ENCODE measurements at regions of chr11 and their contacts with region 1.

Region 1: DNA sequence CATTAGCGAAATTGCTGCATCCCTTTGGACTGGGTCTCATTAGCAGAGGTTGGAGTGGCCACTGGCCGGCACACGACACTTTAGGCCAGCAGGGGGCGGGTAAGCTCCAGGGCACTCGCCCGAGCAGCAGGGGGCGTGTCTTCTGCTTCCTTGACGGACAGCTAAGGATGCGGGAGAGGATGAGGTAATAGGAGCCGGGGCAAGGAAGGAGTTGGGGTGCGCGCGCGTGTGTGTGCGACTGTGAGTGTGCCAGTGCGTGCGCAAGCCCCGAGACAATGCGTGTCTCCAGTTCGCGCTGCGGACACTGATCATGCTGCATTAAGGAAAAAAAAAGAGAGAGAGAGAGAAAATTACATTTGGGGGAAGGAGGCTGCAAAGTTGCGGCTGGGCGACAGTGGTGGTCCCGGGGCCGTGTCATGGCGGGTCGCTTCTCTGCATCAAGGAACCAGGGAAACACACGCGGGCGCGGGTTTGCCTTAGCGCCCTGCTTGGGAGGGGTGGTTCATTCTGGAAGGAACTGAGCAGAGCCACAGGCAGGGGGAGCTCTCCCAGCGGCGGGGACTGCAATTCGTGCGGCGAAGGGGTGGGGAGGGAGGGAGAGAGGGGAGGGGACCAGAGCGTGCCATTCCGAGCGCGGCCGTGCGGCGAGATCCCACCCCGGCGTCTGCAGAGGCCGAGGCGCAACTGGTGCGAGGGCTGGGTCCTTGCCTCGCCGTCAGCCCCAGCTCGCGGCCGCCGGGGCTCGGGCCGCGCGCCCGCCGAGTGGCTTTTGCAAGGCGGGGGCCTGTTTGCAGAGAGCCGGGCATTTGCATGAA is at the start of gene DTX4:
- DNase-seq: peak; percentile 69 to 87 (median 84)
- ATAC-seq: peak; percentile 94
- H3K4me3 ChIP-seq: peak within 1 kb of the TSS; percentile 85
- H3K4me3 Mint-ChIP-seq: peak within 1 kb of the TSS; percentile 81 to 92 (median 89)
- H3K27ac ChIP-seq: peak within 1 kb of the TSS; percentile 10
- H3K27ac Mint-ChIP-seq: peak within 1 kb of the TSS in 5 of 9 donors; percentile 13 to 75 (median 65)
- H3K4me1 ChIP-seq: peaks cover 4 to 7% of the 10 kb centered on the region in 2 donors
- H3K4me1 Mint-ChIP-seq: peaks cover 0 to 16% (median 10%) of the 10 kb centered on the region in 7 donors
- H3K27me3 ChIP-seq: no peaks in the 10 kb centered on the region
- H3K27me3 Mint-ChIP-seq: peaks cover 0 to 43% (median 7%) of the 10 kb centered on the region in 5 donors
- total RNA-seq, gene DTX4: 0.22 to 3.9 (median 2.2) TPM

Region 2: GRCh38 chr11:59158206-59159068 is 13.3 kb before region 1 on chr11:
- CTCF ChIA-PET with region 1: interaction called, 16 read pairs
- POLR2A ChIA-PET with region 1: interaction called, 4 read pairs
- intact Hi-C with region 1: no loop called
- DNase-seq: peak in 8 of 9 donors; percentile 53 to 75 (median 70)
- ATAC-seq: peak; percentile 97
- H3K4me3 ChIP-seq: no peak overlapping the region
- H3K4me3 Mint-ChIP-seq: peak overlapping the region in 1 of 10 donors; percentile 18
- H3K27ac ChIP-seq: no peak overlapping the region
- H3K27ac Mint-ChIP-seq: peak overlapping the region in 7 of 9 donors; percentile 8 to 65 (median 50)
- H3K4me1 ChIP-seq: no peaks in the 10 kb centered on the region
- H3K4me1 Mint-ChIP-seq: peaks cover 4 to 16% (median 5%) of the 10 kb centered on the region in 7 donors
- H3K27me3 ChIP-seq: no peaks in the 10 kb centered on the region
- H3K27me3 Mint-ChIP-seq: peaks cover 9 to 14% (median 9%) of the 10 kb centered on the region in 5 donors

Region 3: DNA sequence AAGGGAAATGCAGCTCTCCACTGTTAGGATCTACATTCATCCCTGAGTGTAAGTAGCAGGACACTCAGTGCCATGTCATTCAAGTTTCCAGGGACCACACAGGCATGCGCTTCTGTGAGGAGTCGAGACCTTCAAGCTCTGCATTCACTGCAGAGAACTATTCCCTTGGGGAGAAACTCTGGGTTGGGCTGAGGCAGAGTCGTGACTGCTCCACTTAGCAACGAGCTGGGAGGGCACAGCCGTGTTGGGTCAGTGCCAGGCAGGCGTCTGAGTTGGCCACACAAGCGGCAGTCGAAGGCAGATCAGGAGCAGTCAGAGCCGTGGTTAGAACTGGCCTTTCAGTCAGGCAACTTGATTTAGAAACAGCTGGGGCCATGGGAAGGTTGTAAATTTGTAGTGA is 26.3 kb after region 1 on chr11:
- CTCF ChIA-PET with region 1: no interaction called
- POLR2A ChIA-PET with region 1: no interaction called
- intact Hi-C with region 1: no loop called
- DNase-seq: no peak
- ATAC-seq: no peak
- H3K4me3 ChIP-seq: no peak overlapping the region
- H3K4me3 Mint-ChIP-seq: no peak overlapping the region
- H3K27ac ChIP-seq: no peak overlapping the region
- H3K27ac Mint-ChIP-seq: no peak overlapping the region
- H3K4me1 ChIP-seq: no peaks in the 10 kb centered on the region
- H3K4me1 Mint-ChIP-seq: peaks cover 0 to 14% (median 7%) of the 10 kb centered on the region in 7 donors
- H3K27me3 ChIP-seq: no peaks in the 10 kb centered on the region
- H3K27me3 Mint-ChIP-seq: peaks cover 0 to 7% (median 0%) of the 10 kb centered on the region in 5 donors

Region 4: DNA sequence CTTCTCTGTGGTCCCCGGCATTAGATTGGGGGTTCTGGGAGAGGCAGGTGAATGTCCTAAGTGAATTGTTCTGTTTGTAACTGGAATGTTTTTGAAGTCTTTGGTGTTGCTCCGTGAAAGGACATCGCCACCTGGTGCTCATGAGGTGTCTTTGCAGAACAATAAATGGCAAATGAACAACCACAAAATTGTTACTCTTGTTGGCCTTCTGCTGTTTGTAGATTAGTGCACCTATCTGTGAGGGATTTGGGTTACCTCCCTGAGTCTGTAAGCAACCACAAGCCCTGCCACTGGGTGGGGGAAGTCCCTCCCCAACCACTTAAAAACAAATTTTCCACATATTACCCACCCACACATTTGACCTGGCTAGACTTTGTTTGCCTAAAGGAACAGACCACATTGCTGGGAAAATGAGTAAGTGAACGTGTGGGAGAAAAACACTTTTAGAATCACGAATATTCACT is 36.3 kb after region 1 on chr11:
- CTCF ChIA-PET with region 1: interaction called, 16 read pairs
- POLR2A ChIA-PET with region 1: no interaction called
- intact Hi-C with region 1: loop called (anchors 1 kb)
- DNase-seq: peak in 8 of 9 donors; percentile 20 to 52 (median 40)
- ATAC-seq: peak; percentile 72
- H3K4me3 ChIP-seq: no peak overlapping the region
- H3K4me3 Mint-ChIP-seq: peak overlapping the region; percentile 18 to 67 (median 50)
- H3K27ac ChIP-seq: no peak overlapping the region
- H3K27ac Mint-ChIP-seq: peak overlapping the region in 8 of 9 donors; percentile 38 to 75 (median 67)
- H3K4me1 ChIP-seq: peaks cover 4 to 19% of the 10 kb centered on the region in 2 donors
- H3K4me1 Mint-ChIP-seq: peaks cover 13 to 29% (median 20%) of the 10 kb centered on the region in 7 donors
- H3K27me3 ChIP-seq: no peaks in the 10 kb centered on the region
- H3K27me3 Mint-ChIP-seq: peaks cover 0 to 19% (median 0%) of the 10 kb centered on the region in 5 donors

Region 5: DNA sequence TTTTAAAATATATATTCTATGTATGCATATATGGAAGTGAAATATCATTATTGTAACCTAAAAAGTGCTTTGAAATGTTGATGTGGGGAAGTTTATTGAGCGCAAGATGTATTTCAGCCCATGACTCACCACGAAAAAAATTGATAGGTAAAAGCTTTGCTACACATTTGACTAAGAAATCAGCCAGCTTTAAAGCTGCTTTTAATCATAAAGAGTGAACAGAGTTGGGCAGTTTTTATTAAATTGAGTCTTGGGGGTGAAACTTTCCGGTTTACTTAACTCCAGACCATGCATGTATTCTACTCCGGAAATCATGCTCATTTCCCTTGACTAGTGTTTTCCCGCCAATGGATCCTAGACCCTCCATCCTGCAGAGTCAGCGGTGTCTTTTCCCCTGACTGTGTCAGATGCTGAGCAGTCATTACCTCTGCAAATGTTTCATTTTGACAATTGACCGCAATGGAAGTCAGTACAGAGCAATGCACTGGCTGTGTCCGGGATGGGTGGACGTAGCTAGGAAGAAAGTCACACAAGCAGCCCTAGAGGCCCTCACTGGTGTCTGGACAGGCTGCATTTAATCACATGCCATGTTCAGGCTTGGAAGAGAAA is 88.3 kb after region 1 on chr11:
- CTCF ChIA-PET with region 1: no interaction called
- POLR2A ChIA-PET with region 1: no interaction called
- intact Hi-C with region 1: no loop called
- DNase-seq: no peak
- ATAC-seq: no peak
- H3K4me3 ChIP-seq: no peak overlapping the region
- H3K4me3 Mint-ChIP-seq: no peak overlapping the region
- H3K27ac ChIP-seq: no peak overlapping the region
- H3K27ac Mint-ChIP-seq: no peak overlapping the region
- H3K4me1 ChIP-seq: no peaks in the 10 kb centered on the region
- H3K4me1 Mint-ChIP-seq: no peaks in the 10 kb centered on the region
- H3K27me3 ChIP-seq: no peaks in the 10 kb centered on the region
- H3K27me3 Mint-ChIP-seq: peaks cover 0 to 3% (median 0%) of the 10 kb centered on the region in 5 donors

Region 6: GRCh38 chr11:59283825-59284772 is 112.4 kb after region 1 on chr11:
- CTCF ChIA-PET with region 1: interaction called, 10 read pairs
- POLR2A ChIA-PET with region 1: no interaction called
- intact Hi-C with region 1: loop called (anchors 1 kb)
- DNase-seq: peak; percentile 21 to 68 (median 57)
- ATAC-seq: peak; percentile 90
- H3K4me3 ChIP-seq: peak overlapping the region; percentile 46
- H3K4me3 Mint-ChIP-seq: peak overlapping the region; percentile 67 to 88 (median 82)
- H3K27ac ChIP-seq: no peak overlapping the region
- H3K27ac Mint-ChIP-seq: peak overlapping the region in 6 of 9 donors; percentile 3 to 92 (median 24)
- H3K4me1 ChIP-seq: peaks cover 0 to 9% of the 10 kb centered on the region in 2 donors
- H3K4me1 Mint-ChIP-seq: peaks cover 11 to 19% (median 18%) of the 10 kb centered on the region in 7 donors
- H3K27me3 ChIP-seq: no peaks in the 10 kb centered on the region
- H3K27me3 Mint-ChIP-seq: peaks cover 5 to 18% (median 12%) of the 10 kb centered on the region in 5 donors

Region 7: DNA sequence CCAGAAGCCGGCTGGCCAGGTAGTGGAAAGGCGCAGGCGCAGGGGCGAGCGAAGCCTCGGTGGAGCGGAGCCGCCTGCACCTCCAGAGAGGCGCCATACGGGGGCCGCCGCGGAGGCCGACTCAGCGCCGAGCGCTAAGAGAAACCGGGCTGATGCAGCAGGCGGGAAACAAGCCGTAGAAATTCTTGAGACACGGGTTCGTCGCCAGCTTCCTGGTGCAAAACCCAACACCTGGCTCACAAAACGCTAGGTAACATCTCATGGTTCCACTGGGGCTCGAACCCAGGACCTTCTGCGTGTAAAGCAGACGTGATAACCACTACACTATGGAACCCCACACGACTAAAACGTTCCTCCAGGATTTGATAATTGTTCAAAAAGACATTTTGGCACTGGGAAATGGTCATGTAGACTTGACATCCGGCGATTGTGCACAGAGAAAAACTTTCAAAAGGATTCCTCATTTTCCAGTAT is 378.7 kb after region 1 on chr11:
- CTCF ChIA-PET with region 1: no interaction called
- POLR2A ChIA-PET with region 1: no interaction called
- intact Hi-C with region 1: loop called in 1 of 2 experiments (anchors 10 kb)
- DNase-seq: peak; percentile 67 to 95 (median 89)
- ATAC-seq: peak; percentile 92
- H3K4me3 ChIP-seq: peak overlapping the region; percentile 59
- H3K4me3 Mint-ChIP-seq: peak overlapping the region; percentile 70 to 98 (median 92)
- H3K27ac ChIP-seq: peak overlapping the region; percentile 66
- H3K27ac Mint-ChIP-seq: peak overlapping the region; percentile 89 to 100 (median 98)
- H3K4me1 ChIP-seq: peaks cover under 1 to 4% of the 10 kb centered on the region in 2 donors
- H3K4me1 Mint-ChIP-seq: peaks cover 0 to 40% (median 32%) of the 10 kb centered on the region in 7 donors
- H3K27me3 ChIP-seq: no peaks in the 10 kb centered on the region
- H3K27me3 Mint-ChIP-seq: peaks cover 0 to 28% (median 0%) of the 10 kb centered on the region in 5 donors

Region 8: GRCh38 chr11:59680287-59681154 is 508.8 kb after region 1 on chr11:
- CTCF ChIA-PET with region 1: no interaction called
- POLR2A ChIA-PET with region 1: no interaction called
- intact Hi-C with region 1: loop called in 1 of 2 experiments (anchors 2 kb)
- DNase-seq: peak in 8 of 9 donors; percentile 43 to 66 (median 58)
- ATAC-seq: peak; percentile 97
- H3K4me3 ChIP-seq: no peak overlapping the region
- H3K4me3 Mint-ChIP-seq: no peak overlapping the region
- H3K27ac ChIP-seq: no peak overlapping the region
- H3K27ac Mint-ChIP-seq: no peak overlapping the region
- H3K4me1 ChIP-seq: no peaks in the 10 kb centered on the region
- H3K4me1 Mint-ChIP-seq: no peaks in the 10 kb centered on the region
- H3K27me3 ChIP-seq: no peaks in the 10 kb centered on the region
- H3K27me3 Mint-ChIP-seq: peaks cover 18 to 39% (median 23%) of the 10 kb centered on the region in 5 donors

Region 9: GRCh38 chr11:59767225-59767611 is 595.5 kb after region 1 on chr11:
- CTCF ChIA-PET with region 1: no interaction called
- POLR2A ChIA-PET with region 1: no interaction called
- intact Hi-C with region 1: loop called in 1 of 2 experiments (anchors 10 kb)
- DNase-seq: peak in 6 of 9 donors; percentile 10 to 55 (median 40)
- ATAC-seq: peak; percentile 80
- H3K4me3 ChIP-seq: peak overlapping the region; percentile 32
- H3K4me3 Mint-ChIP-seq: peak overlapping the region in 5 of 10 donors; percentile 27 to 67 (median 58)
- H3K27ac ChIP-seq: no peak overlapping the region
- H3K27ac Mint-ChIP-seq: peak overlapping the region in 3 of 9 donors; percentile 24 to 81 (median 49)
- H3K4me1 ChIP-seq: peaks cover 31 to 45% of the 10 kb centered on the region in 2 donors
- H3K4me1 Mint-ChIP-seq: peaks cover 7 to 33% (median 27%) of the 10 kb centered on the region in 7 donors
- H3K27me3 ChIP-seq: no peaks in the 10 kb centered on the region
- H3K27me3 Mint-ChIP-seq: peaks cover 0 to 4% (median 0%) of the 10 kb centered on the region in 5 donors